ENCODE measurements at regions of chr12 and their contacts with region 1.

Region 1: DNA sequence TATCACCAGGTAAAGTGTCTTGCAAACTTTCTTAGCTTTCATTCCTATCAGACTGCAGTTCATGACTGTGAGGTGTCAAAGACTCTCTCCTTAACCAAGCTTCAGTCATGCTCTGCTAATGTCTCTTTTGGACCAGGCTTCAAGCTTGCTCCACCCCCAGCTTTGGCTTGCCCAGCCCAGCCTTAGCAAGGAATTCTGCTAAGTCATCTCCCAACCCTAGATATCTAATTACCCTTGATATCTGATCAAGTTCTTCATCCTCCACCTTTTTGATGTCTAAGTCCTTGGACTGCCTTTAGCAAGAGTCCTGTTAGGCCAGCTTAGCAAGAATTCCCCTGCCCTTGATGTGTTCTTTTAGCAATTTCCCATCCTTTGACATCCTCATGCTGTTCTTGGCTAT is 108.9 kb upstream of the FGD4 start:
- DNase-seq: no peak
- ATAC-seq: no peak
- H3K4me3 ChIP-seq: no peak overlapping the region
- H3K4me3 Mint-ChIP-seq: no peak overlapping the region
- H3K27ac ChIP-seq: no peak overlapping the region
- H3K27ac Mint-ChIP-seq: no peak overlapping the region
- H3K4me1 ChIP-seq: no peaks in the 10 kb centered on the region
- H3K4me1 Mint-ChIP-seq: peaks cover 11% of the 10 kb centered on the region
- H3K27me3 ChIP-seq: no peaks in the 10 kb centered on the region
- H3K27me3 Mint-ChIP-seq: no peaks in the 10 kb centered on the region
- CTCF ChIP-seq: no peak

Region 2: GRCh38 chr12:32273712-32274111 is 16.7 kb before region 1 on chr12:
- CTCF ChIA-PET with region 1: interaction called, 3 read pairs
- POLR2A ChIA-PET with region 1: no interaction called
- intact Hi-C with region 1: loop called (anchors 1 kb)
- DNase-seq: peak; percentile 81
- ATAC-seq: peak; percentile 96
- H3K4me3 ChIP-seq: peak overlapping the region in 2 of 5 experiments; percentile 23 to 28
- H3K4me3 Mint-ChIP-seq: peak overlapping the region; percentile 79
- H3K27ac ChIP-seq: peak overlapping the region; percentile 88 to 95
- H3K27ac Mint-ChIP-seq: peak overlapping the region; percentile 98
- H3K4me1 ChIP-seq: peaks cover 38 to 40% of the 10 kb centered on the region in 2 donors
- H3K4me1 Mint-ChIP-seq: peaks cover 36% of the 10 kb centered on the region
- H3K27me3 ChIP-seq: no peaks in the 10 kb centered on the region
- H3K27me3 Mint-ChIP-seq: no peaks in the 10 kb centered on the region
- CTCF ChIP-seq: no peak

Region 3: GRCh38 chr12:32322354-32322753 is 31.9 kb after region 1 on chr12:
- CTCF ChIA-PET with region 1: no interaction called
- POLR2A ChIA-PET with region 1: no interaction called
- intact Hi-C with region 1: no loop called
- DNase-seq: no peak
- ATAC-seq: no peak
- H3K4me3 ChIP-seq: no peak overlapping the region
- H3K4me3 Mint-ChIP-seq: no peak overlapping the region
- H3K27ac ChIP-seq: no peak overlapping the region
- H3K27ac Mint-ChIP-seq: no peak overlapping the region
- H3K4me1 ChIP-seq: no peaks in the 10 kb centered on the region
- H3K4me1 Mint-ChIP-seq: no peaks in the 10 kb centered on the region
- H3K27me3 ChIP-seq: no peaks in the 10 kb centered on the region
- H3K27me3 Mint-ChIP-seq: no peaks in the 10 kb centered on the region
- CTCF ChIP-seq: no peak

Measured in B cell (primary cell).